GM10248 (cell line): ENCODE measurements at regions of chr11 and their contacts with region 1.

Region 1: GRCh38 chr11:105862736-105863367 is 159.2 kb downstream of the MSANTD4 start:
- DNase-seq: peak; percentile 7
- CTCF ChIP-seq: peak; percentile 48

Region 2: DNA sequence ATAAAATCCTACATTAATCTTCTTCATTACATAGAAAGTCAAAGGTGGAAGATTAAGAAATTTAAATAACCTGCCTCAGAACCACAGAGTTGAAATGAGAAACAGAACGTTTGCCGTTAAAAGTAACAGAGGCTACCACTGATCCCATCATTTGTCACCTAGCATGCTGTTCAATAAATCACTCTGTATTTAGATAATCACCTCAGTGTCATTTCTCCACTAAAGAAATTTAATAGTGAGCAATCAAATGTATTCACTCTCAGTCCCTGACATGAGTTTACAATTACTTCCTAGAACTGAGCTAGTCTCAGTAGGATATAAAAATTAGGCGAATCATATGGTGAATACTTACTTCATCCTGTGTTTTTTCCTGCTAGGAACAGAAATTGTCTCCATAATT is 10.4 kb before region 1 on chr11:
- CTCF ChIA-PET with region 1: interaction called, 21 read pairs
- POLR2A ChIA-PET with region 1: no interaction called
- DNase-seq: no peak
- CTCF ChIP-seq: no peak

Region 3: DNA sequence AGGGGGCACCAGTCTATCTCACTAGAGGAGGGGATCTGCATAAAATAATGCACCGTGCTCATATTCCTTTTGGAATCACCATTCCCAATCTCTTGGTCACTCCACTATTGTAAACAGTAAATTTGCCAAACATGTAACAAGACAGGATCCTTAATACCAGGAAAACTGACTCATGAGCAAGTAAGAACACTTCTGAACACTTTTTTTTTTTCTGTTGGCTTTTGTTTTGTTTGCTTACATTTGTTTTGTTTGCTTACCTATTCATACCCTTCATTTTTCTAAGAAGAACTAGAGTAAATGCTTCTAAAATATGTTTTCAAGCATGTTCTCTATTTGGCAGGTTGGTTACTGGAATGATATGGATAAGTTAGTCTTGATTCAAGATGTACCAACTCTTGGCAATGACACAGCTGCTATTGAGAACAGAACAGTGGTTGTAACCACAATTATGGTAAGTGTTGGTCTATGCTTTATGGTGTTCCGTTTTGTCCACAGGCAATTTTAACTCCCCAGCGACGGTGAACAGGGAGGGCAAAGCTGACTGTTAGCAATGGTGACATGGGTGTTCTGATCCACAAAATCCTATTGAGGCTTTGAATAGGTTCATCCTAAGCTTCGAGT is 47.4 kb after region 1 on chr11:
- CTCF ChIA-PET with region 1: no interaction called
- POLR2A ChIA-PET with region 1: no interaction called
- DNase-seq: no peak
- CTCF ChIP-seq: no peak

Region 4: GRCh38 chr11:105923807-105924206 is 61.0 kb after region 1 on chr11:
- CTCF ChIA-PET with region 1: no interaction called
- POLR2A ChIA-PET with region 1: no interaction called
- DNase-seq: no peak
- CTCF ChIP-seq: no peak